Heart right ventricle (tissue), 16 donors: ENCODE measurements at regions of chr14 and their contacts with region 1.

Region 1: GRCh38 chr14:74109369-74109768 is 24.6 kb downstream of the LIN52 start:
- DNase-seq: no peak
- ATAC-seq: no peak
- H3K4me3 ChIP-seq: no peak overlapping the region
- H3K27ac ChIP-seq: no peak overlapping the region
- H3K4me1 ChIP-seq: no peaks in the 10 kb centered on the region
- H3K27me3 ChIP-seq: no peaks in the 10 kb centered on the region
- CTCF ChIP-seq: no peak

Region 2: DNA sequence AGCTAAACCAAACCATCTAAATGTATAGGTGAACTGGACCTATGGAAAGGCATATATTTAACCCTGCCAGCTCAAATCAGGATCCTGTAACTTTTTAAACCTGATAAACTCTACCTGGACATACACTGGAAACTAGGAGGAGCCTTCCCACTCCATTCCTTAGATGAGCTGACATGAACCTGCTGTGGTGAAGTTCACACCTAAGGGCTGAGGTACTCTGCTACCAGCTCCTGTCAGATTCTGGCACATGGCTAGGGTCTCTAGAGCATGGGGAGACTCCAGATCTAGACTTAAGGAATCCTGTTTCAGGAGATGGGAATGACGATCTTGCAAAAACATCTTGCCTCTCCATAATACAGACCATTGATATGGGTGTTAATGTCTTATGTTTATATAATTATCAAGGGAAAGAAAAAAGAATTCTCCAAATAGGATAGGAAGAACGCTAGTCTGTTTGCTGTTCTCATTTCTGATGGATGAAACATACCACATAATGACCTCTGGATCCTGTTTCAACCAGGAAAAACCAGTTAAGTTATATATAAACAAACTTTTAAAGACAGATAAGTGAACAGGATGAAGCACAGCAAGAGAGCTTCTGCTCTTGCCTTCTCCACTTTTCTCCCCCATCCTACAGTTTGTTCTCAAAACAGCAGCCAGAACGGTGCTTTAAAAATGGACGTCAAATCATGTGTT is 131.6 kb before region 1 on chr14:
- intact Hi-C with region 1: no loop called
- DNase-seq: no peak
- ATAC-seq: no peak
- H3K4me3 ChIP-seq: no peak overlapping the region
- H3K27ac ChIP-seq: no peak overlapping the region
- H3K4me1 ChIP-seq: peaks cover 0 to 9% (median 0%) of the 10 kb centered on the region in 9 donors
- H3K27me3 ChIP-seq: no peaks in the 10 kb centered on the region
- CTCF ChIP-seq: no peak

Region 3: DNA sequence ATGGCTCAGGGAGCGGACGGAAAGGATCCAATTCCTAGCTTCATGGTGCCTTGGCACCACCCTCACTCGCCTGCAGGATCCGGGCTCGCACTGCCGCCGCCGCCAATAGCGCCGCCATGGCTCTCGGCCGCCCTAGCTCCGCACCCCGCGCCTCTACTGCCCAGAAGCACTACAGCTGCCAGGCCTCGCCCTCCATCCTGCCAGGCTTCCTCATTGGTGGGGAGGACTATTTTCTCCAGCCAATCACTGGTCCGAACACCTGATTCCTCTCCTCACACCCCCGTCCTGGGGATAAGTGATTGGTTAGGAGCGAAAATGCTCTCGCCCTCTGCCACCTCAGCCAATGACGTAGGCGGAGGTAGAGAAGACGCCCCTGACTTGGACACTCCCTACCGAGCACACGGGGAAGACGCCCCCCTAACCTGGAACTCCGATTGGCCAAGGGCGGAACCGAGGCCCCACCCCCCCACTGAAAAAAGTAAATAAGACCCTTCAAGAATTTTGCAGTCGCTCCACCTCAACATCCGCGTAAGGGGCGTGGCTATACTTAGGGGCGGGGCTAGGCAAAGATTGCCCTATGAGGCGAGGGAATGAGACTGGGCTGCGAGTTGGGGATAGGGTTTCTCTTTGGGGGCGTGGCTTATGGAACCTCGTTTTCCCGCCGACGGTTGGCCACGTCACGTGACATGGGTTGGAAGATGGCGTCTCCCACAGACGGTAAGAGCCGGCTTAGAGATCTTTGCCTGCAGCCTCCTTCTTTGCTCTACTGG is 24.9 kb before region 1 on chr14 and contains the starts of genes ALDH6A1 and LIN52:
- intact Hi-C with region 1: no loop called
- DNase-seq: peak; percentile 93 to 100
- ATAC-seq: peak; percentile 96 to 98 (median 98)
- H3K4me3 ChIP-seq: peak within 1 kb of the TSS; percentile 51 to 91 (median 83)
- H3K27ac ChIP-seq: peak within 1 kb of the TSS; percentile 53 to 89 (median 82)
- H3K4me1 ChIP-seq: peaks cover 0 to 50% (median 35%) of the 10 kb centered on the region in 9 donors
- H3K27me3 ChIP-seq: no peaks in the 10 kb centered on the region
- CTCF ChIP-seq: peak in 4 of 9 donors; percentile 9 to 23 (median 20)
- total RNA-seq, gene ALDH6A1: 36.9 to 129 (median 81.5) TPM
- total RNA-seq, gene LIN52: 4.7 to 13.6 (median 9.0) TPM

Region 4: DNA sequence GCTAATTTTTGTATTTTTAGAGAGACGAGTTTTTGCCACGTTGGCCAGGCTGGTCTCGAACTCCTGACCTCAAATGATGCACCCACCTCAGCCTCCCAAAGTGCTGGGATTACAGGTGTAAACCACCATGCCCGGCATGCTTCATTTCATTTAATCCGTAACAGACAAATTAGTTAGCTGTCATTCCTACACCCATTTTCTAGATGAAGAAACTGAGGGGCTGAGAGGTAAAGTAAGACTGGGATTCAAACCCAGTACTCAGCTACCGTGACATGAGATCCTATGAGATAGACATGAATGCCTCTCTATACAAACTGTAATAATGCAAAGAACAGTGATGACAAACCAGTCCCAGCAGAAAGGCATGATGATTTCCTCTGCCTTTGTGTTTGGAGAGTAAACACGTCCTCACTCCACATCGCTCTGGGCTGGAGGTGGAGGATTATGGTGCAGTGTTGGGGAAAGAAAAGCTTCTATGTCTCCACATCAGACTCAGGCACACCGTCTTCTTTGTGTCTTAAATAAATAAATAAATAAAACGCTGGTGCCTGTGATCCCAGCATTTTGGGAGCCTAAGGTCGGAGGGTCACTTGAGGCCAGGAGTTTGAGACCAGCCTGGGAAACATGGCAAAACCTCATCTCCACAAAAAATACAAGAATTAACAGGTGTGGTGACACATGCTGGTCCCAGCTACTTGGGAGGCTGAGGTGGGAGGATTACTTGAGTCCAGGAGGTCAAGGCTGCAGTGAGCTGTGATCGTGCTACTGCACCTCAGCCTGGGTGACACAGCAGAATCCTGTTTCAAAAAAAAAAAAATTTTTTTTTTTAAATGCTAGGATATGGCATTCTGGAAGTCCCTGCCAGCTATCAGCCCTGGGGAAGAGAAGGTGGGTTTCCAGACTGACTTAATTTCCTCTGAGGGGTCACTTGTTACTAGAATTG is 140.3 kb after region 1 on chr14:
- intact Hi-C with region 1: loop called in 9 of 10 experiments (anchors 2 to 5 kb)
- DNase-seq: no peak
- ATAC-seq: no peak
- H3K4me3 ChIP-seq: no peak overlapping the region
- H3K27ac ChIP-seq: no peak overlapping the region
- H3K4me1 ChIP-seq: peaks cover 0 to 12% (median 4%) of the 10 kb centered on the region in 9 donors
- H3K27me3 ChIP-seq: peaks cover 0 to 42% (median 33%) of the 10 kb centered on the region in 7 donors
- CTCF ChIP-seq: no peak

Region 5: DNA sequence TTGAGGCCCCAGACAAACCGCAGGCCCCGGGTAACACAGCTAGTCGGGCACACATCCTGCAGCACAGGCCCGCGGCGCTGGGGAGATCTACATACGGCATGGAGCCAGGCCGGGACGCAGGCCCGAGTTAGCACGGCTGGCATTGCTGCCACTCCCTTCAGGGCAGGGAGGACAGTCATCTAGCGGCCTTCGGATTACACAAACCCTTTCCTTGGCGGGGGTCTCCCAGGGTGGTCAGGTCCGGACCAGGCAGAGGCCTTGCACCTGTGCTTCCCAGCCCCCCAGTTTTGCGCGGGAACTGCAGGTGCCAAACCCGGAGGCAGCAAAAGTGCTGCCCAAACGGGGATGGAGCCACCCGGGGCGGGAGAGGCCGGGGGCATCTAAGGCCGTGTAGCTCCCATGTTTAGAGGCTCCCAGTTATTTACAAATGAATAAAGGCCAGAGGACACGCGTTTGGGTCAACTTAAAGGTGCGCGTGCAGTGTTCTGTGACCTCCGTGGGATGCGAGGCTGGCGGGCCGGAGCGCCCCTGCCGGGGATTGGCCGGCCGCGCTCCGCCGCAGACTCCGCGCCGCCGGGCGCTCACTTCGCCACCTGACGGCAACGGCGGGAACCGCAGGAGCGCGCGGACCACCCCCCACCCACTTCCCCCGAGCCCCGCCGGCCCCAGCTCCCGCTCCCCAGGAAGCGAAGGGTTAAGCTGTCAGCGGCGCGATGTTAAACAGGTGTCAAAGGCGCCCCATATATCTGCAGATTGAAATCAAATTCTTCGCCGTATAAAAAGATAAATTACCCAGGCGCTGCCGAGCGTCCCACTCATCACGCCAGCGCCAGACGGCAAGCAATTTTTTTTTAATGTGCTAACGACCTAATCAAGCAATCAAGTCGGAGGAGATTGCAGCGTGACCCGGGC is 148.0 kb after region 1 on chr14:
- intact Hi-C with region 1: loop called in 4 of 10 experiments (anchors 2 to 5 kb)
- DNase-seq: peak; percentile 17 to 51
- ATAC-seq: peak; percentile 80 to 88 (median 84)
- H3K4me3 ChIP-seq: peak overlapping the region; percentile 50 to 84 (median 72)
- H3K27ac ChIP-seq: peak overlapping the region in 4 of 10 donors; percentile 14 to 57 (median 44)
- H3K4me1 ChIP-seq: peaks cover 0 to 17% (median 13%) of the 10 kb centered on the region in 9 donors
- H3K27me3 ChIP-seq: peaks cover 0 to 20% (median 0%) of the 10 kb centered on the region in 7 donors
- CTCF ChIP-seq: peak in 8 of 9 donors; percentile 93 to 99 (median 97)